Activated T-helper 1 cell treated with anti-CD3 and anti-CD28 coated beads, Interleukin-12 subunit alpha, Interleukin-12 subunit beta, Interleukin-2, Interleukin-4 antibody, amounts not matched to agents 30 ng/mL and 10 ng/mL and 1 ng/mL, durations not matched to agents 14 hours and 24 hours and 36 hours (primary cell): ENCODE measurements at regions of chr21 and their contacts with region 1.

Region 1: DNA sequence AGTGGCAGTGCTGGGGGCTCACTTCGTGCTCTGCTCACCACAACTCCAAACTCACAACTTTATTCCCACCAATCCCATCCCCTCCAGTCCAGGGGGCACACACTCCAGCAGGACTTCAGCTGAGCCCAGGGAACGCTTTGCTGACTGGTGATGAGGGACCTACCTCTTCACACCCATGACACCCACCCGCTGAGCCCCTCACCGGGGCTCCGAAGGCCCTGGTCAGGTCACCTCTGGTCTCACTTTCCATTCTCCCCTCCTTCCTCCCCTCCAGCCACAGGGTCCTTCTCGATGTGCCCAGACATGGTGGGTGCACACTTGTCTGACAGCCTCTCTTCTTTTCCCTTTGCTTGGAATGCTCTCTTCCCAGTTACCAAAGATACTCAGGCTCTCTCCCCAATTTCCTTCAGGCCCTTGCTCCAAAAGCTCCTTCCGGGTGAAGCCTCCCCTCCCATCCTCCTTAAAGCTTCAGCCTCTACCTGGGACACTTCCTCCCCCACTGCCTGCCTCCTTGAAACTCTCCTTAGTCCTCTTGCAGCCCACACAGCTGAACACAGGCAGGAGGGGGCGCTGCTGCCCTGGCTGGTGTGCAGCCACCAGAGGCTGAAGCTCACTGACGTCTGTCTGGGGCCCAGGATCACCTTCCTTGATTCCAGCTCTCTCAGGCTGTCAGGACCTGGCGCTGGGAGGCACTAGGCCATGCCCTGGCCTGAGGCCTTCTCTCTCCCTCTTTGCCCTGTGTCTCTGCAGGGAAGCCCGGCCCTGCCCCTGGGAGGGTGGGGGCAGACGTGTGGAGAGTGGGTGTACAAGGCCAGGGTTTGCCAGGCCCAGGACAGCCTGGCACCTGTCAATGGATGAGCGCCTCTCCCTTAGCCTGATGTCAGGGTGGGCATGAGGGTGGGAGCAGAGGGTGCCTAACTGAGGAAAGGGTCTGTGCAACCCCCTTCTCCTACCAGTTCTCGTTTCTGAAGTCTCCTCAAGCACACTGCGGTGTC is 1.6 kb downstream of the KCNE1 start:
- DNase-seq: no peak
- H3K4me3 Mint-ChIP-seq: no peak overlapping the region
- H3K27ac Mint-ChIP-seq: no peak overlapping the region
- H3K4me1 Mint-ChIP-seq: no peaks in the 10 kb centered on the region
- H3K27me3 Mint-ChIP-seq: peaks cover 2% of the 10 kb centered on the region

Region 2: GRCh38 chr21:34582506-34583150 is 72.2 kb after region 1 on chr21:
- intact Hi-C with region 1: loop called (anchors 1 kb)
- DNase-seq: no peak
- H3K4me3 Mint-ChIP-seq: no peak overlapping the region
- H3K27ac Mint-ChIP-seq: no peak overlapping the region
- H3K4me1 Mint-ChIP-seq: peaks cover 12% of the 10 kb centered on the region
- H3K27me3 Mint-ChIP-seq: no peaks in the 10 kb centered on the region